ENCODE measurements at regions of chr16 and their contacts with region 1.

Region 1: DNA sequence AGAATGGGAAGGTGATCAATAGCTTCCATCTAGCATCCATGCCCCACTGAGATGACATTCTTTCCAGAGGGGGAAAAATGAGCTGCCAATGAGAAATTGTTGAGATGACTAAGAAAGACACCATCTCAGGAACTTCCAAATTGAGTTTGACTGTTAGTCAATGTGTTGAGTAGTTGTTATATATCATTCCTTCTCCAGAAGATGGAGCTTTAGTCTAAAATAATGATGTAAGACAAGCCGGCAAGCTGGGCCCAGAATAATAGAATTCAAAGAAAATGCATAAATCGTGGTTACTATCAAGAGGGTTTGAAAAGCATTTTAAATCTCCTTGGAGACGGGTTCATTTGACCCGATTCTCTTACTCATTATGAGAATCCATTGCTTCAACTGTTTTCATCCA is 71.0 kb upstream of the ATF7IP2 start:
- DNase-seq: peak; percentile 41
- H3K4me3 ChIP-seq: no peak overlapping the region
- H3K27ac ChIP-seq: no peak overlapping the region
- H3K4me1 ChIP-seq: no peaks in the 10 kb centered on the region
- H3K27me3 ChIP-seq: no peaks in the 10 kb centered on the region
- CTCF ChIP-seq: peak; percentile 44; the same call in 1 of the 2 replicates

Region 2: GRCh38 chr16:10529895-10530669 is 215.3 kb after region 1 on chr16:
- CTCF ChIA-PET with region 1: no interaction called
- POLR2A ChIA-PET with region 1: no interaction called
- intact Hi-C with region 1: no loop called
- DNase-seq: no peak
- H3K4me3 ChIP-seq: no peak overlapping the region
- H3K27ac ChIP-seq: no peak overlapping the region
- H3K4me1 ChIP-seq: no peaks in the 10 kb centered on the region
- H3K27me3 ChIP-seq: no peaks in the 10 kb centered on the region
- CTCF ChIP-seq: no peak

Region 3: GRCh38 chr16:10729104-10730048 is 414.6 kb after region 1 on chr16:
- CTCF ChIA-PET with region 1: no interaction called
- POLR2A ChIA-PET with region 1: no interaction called
- intact Hi-C with region 1: loop called (anchors 5 kb)
- DNase-seq: peak; percentile 65
- H3K4me3 ChIP-seq: no peak overlapping the region
- H3K27ac ChIP-seq: no peak overlapping the region
- H3K4me1 ChIP-seq: no peaks in the 10 kb centered on the region
- H3K27me3 ChIP-seq: no peaks in the 10 kb centered on the region
- CTCF ChIP-seq: 0 out of 2 replicates have a peak, but pooled peaks have one; percentile 21